Endothelial cell of umbilical vein (primary cell): ENCODE measurements at regions of chr2 and their contacts with region 1.

Region 1: GRCh38 chr2:26577434-26578112 is 63.6 kb downstream of the CIB4 start:
- DNase-seq: peak; percentile 59
- H3K4me3 ChIP-seq: no peak overlapping the region
- H3K27ac ChIP-seq: no peak overlapping the region
- H3K4me1 ChIP-seq: no peaks in the 10 kb centered on the region
- H3K27me3 ChIP-seq: peaks cover 0 to 7% of the 10 kb centered on the region in 2 experiments
- CTCF ChIP-seq: peak; percentile 95 to 98
- POLR2A ChIP-seq: no peak

Region 2: GRCh38 chr2:25772078-25772477 is 805.5 kb before region 1 on chr2:
- CTCF ChIA-PET with region 1: no interaction called
- POLR2A ChIA-PET with region 1: no interaction called
- dilution Hi-C with region 1: no loop called
- intact Hi-C with region 1: no loop called
- DNase-seq: no peak
- H3K4me3 ChIP-seq: no peak overlapping the region
- H3K27ac ChIP-seq: no peak overlapping the region
- H3K4me1 ChIP-seq: no peaks in the 10 kb centered on the region
- H3K27me3 ChIP-seq: no peaks in the 10 kb centered on the region
- CTCF ChIP-seq: no peak
- POLR2A ChIP-seq: no peak

Region 3: GRCh38 chr2:26503231-26503880 is 74.2 kb before region 1 on chr2:
- CTCF ChIA-PET with region 1: interaction called, 35 read pairs
- POLR2A ChIA-PET with region 1: no interaction called
- dilution Hi-C with region 1: no loop called
- intact Hi-C with region 1: loop called (anchors 1 kb)
- DNase-seq: peak; percentile 71
- H3K4me3 ChIP-seq: peak overlapping the region; percentile 8 to 23 (median 9)
- H3K27ac ChIP-seq: no peak overlapping the region
- H3K4me1 ChIP-seq: no peaks in the 10 kb centered on the region
- H3K27me3 ChIP-seq: peaks cover 0 to under 1% of the 10 kb centered on the region in 2 experiments
- CTCF ChIP-seq: peak; percentile 90 to 95
- POLR2A ChIP-seq: no peak

Region 4: DNA sequence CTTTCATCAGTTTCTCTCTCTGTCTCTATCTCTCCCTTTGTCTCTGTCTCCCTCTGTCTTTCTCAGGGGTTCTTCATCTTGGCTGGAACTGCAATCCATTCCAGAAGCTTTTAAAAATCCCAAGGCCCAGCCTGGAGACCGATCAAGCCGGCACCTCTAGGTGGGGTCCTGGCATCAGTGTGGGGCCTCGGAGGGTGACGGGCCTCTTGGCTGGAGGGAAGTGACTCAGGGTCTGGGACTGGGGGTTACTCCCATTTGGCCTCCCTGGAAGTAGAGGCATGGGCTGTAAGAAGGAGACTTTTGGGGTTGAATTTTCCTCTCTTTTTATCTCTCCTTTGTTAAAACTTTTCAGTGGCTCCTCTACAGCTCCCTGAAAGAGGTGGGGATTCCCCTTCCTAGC is 46.9 kb before region 1 on chr2:
- CTCF ChIA-PET with region 1: interaction called, 10 read pairs
- POLR2A ChIA-PET with region 1: no interaction called
- dilution Hi-C with region 1: no loop called
- intact Hi-C with region 1: loop called (anchors 5 kb)
- DNase-seq: peak; percentile 7
- H3K4me3 ChIP-seq: no peak overlapping the region
- H3K27ac ChIP-seq: no peak overlapping the region
- H3K4me1 ChIP-seq: peaks cover 4% of the 10 kb centered on the region
- H3K27me3 ChIP-seq: no peaks in the 10 kb centered on the region
- CTCF ChIP-seq: no peak
- POLR2A ChIP-seq: no peak

Region 5: GRCh38 chr2:26561918-26562810 is 15.4 kb before region 1 on chr2:
- CTCF ChIA-PET with region 1: interaction called, 12 read pairs
- POLR2A ChIA-PET with region 1: no interaction called
- dilution Hi-C with region 1: no loop called
- intact Hi-C with region 1: no loop called
- DNase-seq: peak; percentile 55
- H3K4me3 ChIP-seq: peak overlapping the region in 2 of 3 experiments; percentile 14 to 24
- H3K27ac ChIP-seq: no peak overlapping the region
- H3K4me1 ChIP-seq: peaks cover 7% of the 10 kb centered on the region
- H3K27me3 ChIP-seq: peaks cover 36 to 49% of the 10 kb centered on the region in 2 experiments
- CTCF ChIP-seq: peak; percentile 41 to 61
- POLR2A ChIP-seq: no peak

Region 6: DNA sequence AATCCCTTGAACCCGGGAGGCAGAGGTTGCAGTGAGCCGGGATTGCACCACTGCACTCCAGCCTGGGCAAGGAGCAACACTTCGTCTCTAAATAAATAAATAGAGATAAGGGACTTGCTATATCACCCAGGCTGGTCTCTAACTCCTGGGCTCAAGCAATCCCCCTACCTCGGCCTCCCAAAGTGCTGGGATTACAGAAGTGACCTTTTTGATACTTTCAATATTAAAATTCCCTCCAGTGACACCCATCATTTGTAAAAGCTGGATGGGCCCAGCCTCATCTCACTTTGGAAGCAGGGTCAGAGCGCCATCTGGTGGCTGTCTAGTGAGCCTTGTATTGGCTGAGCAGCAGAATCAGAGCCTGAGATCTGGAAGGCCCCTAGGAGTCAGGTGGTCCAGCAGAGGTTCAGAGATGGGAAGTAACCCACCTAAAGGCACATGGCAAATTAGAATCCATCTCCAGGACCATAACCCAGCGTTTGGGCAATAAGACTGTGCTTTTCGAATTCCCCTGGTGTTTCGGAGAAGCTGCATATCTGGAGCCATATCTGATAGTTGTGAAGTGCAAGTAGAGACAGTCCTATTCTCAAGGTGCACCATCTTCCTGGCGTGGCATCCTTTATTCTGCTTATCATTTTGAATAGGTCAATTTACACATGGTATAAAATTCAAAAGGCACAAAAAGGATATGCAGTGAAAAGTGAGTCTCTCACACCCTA is 168.2 kb after region 1 on chr2:
- CTCF ChIA-PET with region 1: interaction called, 25 read pairs
- POLR2A ChIA-PET with region 1: no interaction called
- dilution Hi-C with region 1: no loop called
- intact Hi-C with region 1: no loop called
- DNase-seq: peak; percentile 69
- H3K4me3 ChIP-seq: no peak overlapping the region
- H3K27ac ChIP-seq: no peak overlapping the region
- H3K4me1 ChIP-seq: no peaks in the 10 kb centered on the region
- H3K27me3 ChIP-seq: no peaks in the 10 kb centered on the region
- CTCF ChIP-seq: peak; percentile 87 to 88
- POLR2A ChIP-seq: no peak